AG04450 (cell line): ENCODE measurements at regions of chr12 and their contacts with region 1.

Region 1: GRCh38 chr12:7970475-7971252 is 34.7 kb upstream of the SLC2A3 start:
- DNase-seq: peak; percentile 68
- H3K4me3 ChIP-seq: peak overlapping the region; percentile 58
- H3K27ac ChIP-seq: peak overlapping the region; percentile 89
- H3K27me3 ChIP-seq: no peaks in the 10 kb centered on the region
- CTCF ChIP-seq: no peak; the same call in 1 of the 2 replicates

Region 2: GRCh38 chr12:7959701-7960121 is 11.0 kb before region 1 on chr12:
- CTCF ChIA-PET with region 1: interaction called, 11 read pairs
- POLR2A ChIA-PET with region 1: interaction called, 9 read pairs
- DNase-seq: no peak
- H3K4me3 ChIP-seq: no peak overlapping the region
- H3K27ac ChIP-seq: no peak overlapping the region
- H3K27me3 ChIP-seq: no peaks in the 10 kb centered on the region
- CTCF ChIP-seq: no peak